Heart left ventricle (tissue), 16 donors: ENCODE measurements at regions of chr7 and their contacts with region 1.

Region 1: DNA sequence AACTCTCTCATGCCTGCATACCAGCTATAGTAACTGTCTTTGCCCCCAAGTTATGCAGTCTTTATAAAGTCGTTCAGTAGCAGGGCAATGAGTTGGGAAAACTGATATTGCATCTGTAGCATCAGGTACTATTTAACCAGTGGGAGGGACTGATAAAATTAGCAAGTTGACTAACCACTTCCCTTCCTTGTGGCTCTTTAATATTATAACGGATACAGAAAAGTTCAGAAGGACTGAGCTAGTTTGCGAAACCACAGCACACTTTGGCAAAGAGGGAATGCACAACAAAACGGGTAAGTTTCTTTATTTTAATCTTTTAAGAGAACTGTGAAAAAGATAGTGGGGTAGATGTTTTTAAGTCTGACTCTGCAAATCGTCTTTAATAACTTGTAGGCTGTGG is 205.3 kb upstream of the HDAC9 start:
- DNase-seq: no peak
- ATAC-seq: peak in 2 of 4 donors; percentile 34 to 41
- H3K4me3 ChIP-seq: peak overlapping the region in 9 of 12 donors; percentile 5 to 51 (median 26)
- H3K27ac ChIP-seq: peak overlapping the region in 1 of 12 donors; percentile 27
- H3K4me1 ChIP-seq: peaks cover 0 to 54% (median 8%) of the 10 kb centered on the region in 12 donors
- H3K27me3 ChIP-seq: no peaks in the 10 kb centered on the region
- CTCF ChIP-seq: no peak
- POLR2A ChIP-seq: no peak

Region 2: GRCh38 chr7:18064242-18064838 is 225.9 kb before region 1 on chr7:
- intact Hi-C with region 1: loop called in 5 of 10 experiments (anchors 5 to 10 kb)
- DNase-seq: peak in 2 of 5 donors; percentile 14 to 18
- ATAC-seq: peak in 2 of 4 donors; percentile 36 to 56
- H3K4me3 ChIP-seq: no peak overlapping the region
- H3K27ac ChIP-seq: no peak overlapping the region
- H3K4me1 ChIP-seq: no peaks in the 10 kb centered on the region
- H3K27me3 ChIP-seq: no peaks in the 10 kb centered on the region
- CTCF ChIP-seq: peak; percentile 30 to 67 (median 58)
- POLR2A ChIP-seq: no peak

Region 3: DNA sequence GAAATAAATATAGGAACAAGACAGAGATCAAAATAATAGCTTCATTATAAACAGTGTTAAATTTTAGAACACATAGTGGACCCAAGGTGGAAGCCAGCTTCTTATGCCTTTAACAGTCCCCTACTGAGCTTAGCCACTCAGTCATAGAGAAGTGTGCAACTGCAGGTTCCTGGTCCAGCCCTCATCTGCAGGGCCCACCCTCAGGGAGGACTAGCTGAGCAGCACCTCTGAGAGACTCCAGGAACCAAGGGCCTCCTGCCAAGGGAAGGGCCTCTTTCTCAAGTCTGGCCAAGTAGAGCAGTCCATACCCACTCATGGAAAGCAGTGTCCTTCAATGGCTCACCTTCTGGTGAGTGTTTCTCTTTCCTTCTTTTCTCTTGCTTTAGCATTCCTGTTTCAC is 88.9 kb before region 1 on chr7:
- intact Hi-C with region 1: no loop called
- DNase-seq: peak in 4 of 5 donors; percentile 30 to 36 (median 32)
- ATAC-seq: peak; percentile 55 to 72 (median 69)
- H3K4me3 ChIP-seq: no peak overlapping the region
- H3K27ac ChIP-seq: peak overlapping the region in 8 of 12 donors; percentile 5 to 43 (median 8)
- H3K4me1 ChIP-seq: peaks cover 0 to 20% (median 7%) of the 10 kb centered on the region in 12 donors
- H3K27me3 ChIP-seq: no peaks in the 10 kb centered on the region
- CTCF ChIP-seq: no peak
- POLR2A ChIP-seq: no peak

Region 4: GRCh38 chr7:18221377-18222293 is 68.6 kb before region 1 on chr7:
- intact Hi-C with region 1: loop called in 2 of 10 experiments (anchors 5 to 10 kb)
- DNase-seq: no peak
- ATAC-seq: peak in 3 of 4 donors; percentile 27 to 50 (median 43)
- H3K4me3 ChIP-seq: no peak overlapping the region
- H3K27ac ChIP-seq: peak overlapping the region in 4 of 12 donors; percentile 2 to 57 (median 11)
- H3K4me1 ChIP-seq: peaks cover 0 to 60% (median 7%) of the 10 kb centered on the region in 12 donors
- H3K27me3 ChIP-seq: no peaks in the 10 kb centered on the region
- CTCF ChIP-seq: no peak
- POLR2A ChIP-seq: no peak